CD4-positive, alpha-beta T cell (primary cell): ENCODE measurements at regions of chr2 and their contacts with region 1.

Region 1: GRCh38 chr2:203484266-203485112 is 50.6 kb downstream of the RAPH1 start:
- DNase-seq: peak; percentile 34 to 83 (median 48)
- ATAC-seq: peak; percentile 98
- H3K4me3 ChIP-seq: no peak overlapping the region
- H3K4me3 Mint-ChIP-seq: no peak overlapping the region
- H3K27ac ChIP-seq: no peak overlapping the region
- H3K27ac Mint-ChIP-seq: no peak overlapping the region
- H3K4me1 ChIP-seq: peaks cover 3% of the 10 kb centered on the region
- H3K4me1 Mint-ChIP-seq: peaks cover 6% of the 10 kb centered on the region
- H3K27me3 ChIP-seq: no peaks in the 10 kb centered on the region
- H3K27me3 Mint-ChIP-seq: no peaks in the 10 kb centered on the region
- CTCF ChIP-seq: peak; percentile 77

Region 2: GRCh38 chr2:203056288-203056687 is 428.2 kb before region 1 on chr2:
- CTCF ChIA-PET with region 1: no interaction called
- POLR2A ChIA-PET with region 1: no interaction called
- intact Hi-C with region 1: no loop called
- DNase-seq: no peak
- ATAC-seq: no peak
- H3K4me3 ChIP-seq: no peak overlapping the region
- H3K4me3 Mint-ChIP-seq: no peak overlapping the region
- H3K27ac ChIP-seq: no peak overlapping the region
- H3K27ac Mint-ChIP-seq: no peak overlapping the region
- H3K4me1 ChIP-seq: no peaks in the 10 kb centered on the region
- H3K4me1 Mint-ChIP-seq: no peaks in the 10 kb centered on the region
- H3K27me3 ChIP-seq: no peaks in the 10 kb centered on the region
- H3K27me3 Mint-ChIP-seq: no peaks in the 10 kb centered on the region
- CTCF ChIP-seq: no peak

Region 3: DNA sequence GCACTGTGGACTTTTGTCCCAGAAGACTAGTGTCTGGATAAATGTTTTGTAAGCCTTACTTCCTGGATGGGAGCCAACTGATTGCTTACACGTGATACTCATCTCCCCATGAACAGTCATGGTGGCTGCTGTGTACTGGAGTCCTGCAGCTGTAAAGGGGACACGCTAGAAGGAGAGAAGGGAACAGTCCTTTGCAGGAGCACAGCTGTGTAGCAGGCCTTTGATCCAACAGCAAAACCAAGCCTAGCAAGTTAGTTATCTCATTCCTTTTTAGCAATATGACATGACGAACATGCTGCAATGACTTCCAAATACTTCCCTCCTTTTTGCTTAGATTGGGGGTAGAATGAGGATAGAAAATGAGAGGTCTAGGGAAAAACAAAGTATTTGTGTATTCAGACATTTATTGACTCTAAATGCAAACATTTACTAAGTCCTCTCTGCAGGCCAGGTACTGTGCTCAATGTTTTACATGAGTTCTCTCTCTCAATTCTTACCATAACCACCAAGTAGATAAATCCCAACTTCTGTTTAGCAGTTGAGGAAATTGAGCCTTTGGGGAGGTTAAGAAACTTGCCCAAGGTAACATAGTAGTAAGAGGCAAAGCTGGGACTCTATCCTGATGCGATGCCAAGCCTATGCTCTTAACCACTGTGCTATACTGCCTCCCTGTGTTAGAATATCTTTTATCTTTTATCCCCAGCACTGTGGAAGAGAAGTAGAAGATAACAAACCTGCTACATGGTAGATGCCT is 166.5 kb after region 1 on chr2:
- CTCF ChIA-PET with region 1: no interaction called
- POLR2A ChIA-PET with region 1: no interaction called
- intact Hi-C with region 1: loop called in 1 of 2 experiments (anchors 5 kb)
- DNase-seq: peak in 3 of 14 experiments; percentile 36 to 45 (median 38)
- ATAC-seq: no peak
- H3K4me3 ChIP-seq: no peak overlapping the region
- H3K4me3 Mint-ChIP-seq: no peak overlapping the region
- H3K27ac ChIP-seq: no peak overlapping the region
- H3K27ac Mint-ChIP-seq: no peak overlapping the region
- H3K4me1 ChIP-seq: no peaks in the 10 kb centered on the region
- H3K4me1 Mint-ChIP-seq: peaks cover 29% of the 10 kb centered on the region
- H3K27me3 ChIP-seq: no peaks in the 10 kb centered on the region
- H3K27me3 Mint-ChIP-seq: no peaks in the 10 kb centered on the region
- CTCF ChIP-seq: no peak

Region 4: GRCh38 chr2:203909261-203909967 is 424.9 kb after region 1 on chr2:
- CTCF ChIA-PET with region 1: interaction called, 5 read pairs
- POLR2A ChIA-PET with region 1: interaction called, 4 read pairs
- intact Hi-C with region 1: loop called (anchors 1 kb)
- DNase-seq: peak in 7 of 14 experiments; percentile 10 to 70 (median 45)
- ATAC-seq: peak; percentile 82
- H3K4me3 ChIP-seq: peak overlapping the region; percentile 39
- H3K4me3 Mint-ChIP-seq: peak overlapping the region; percentile 5
- H3K27ac ChIP-seq: no peak overlapping the region
- H3K27ac Mint-ChIP-seq: peak overlapping the region; percentile 18
- H3K4me1 ChIP-seq: peaks cover 13% of the 10 kb centered on the region
- H3K4me1 Mint-ChIP-seq: peaks cover 19% of the 10 kb centered on the region
- H3K27me3 ChIP-seq: no peaks in the 10 kb centered on the region
- H3K27me3 Mint-ChIP-seq: no peaks in the 10 kb centered on the region
- CTCF ChIP-seq: peak; percentile 87

Region 5: GRCh38 chr2:204051476-204051875 is 567.0 kb after region 1 on chr2:
- CTCF ChIA-PET with region 1: no interaction called
- POLR2A ChIA-PET with region 1: no interaction called
- intact Hi-C with region 1: loop called in 1 of 2 experiments (anchors 5 kb)
- DNase-seq: peak in 4 of 14 experiments; percentile 5 to 55 (median 47)
- ATAC-seq: peak; percentile 52
- H3K4me3 ChIP-seq: no peak overlapping the region
- H3K4me3 Mint-ChIP-seq: no peak overlapping the region
- H3K27ac ChIP-seq: no peak overlapping the region
- H3K27ac Mint-ChIP-seq: no peak overlapping the region
- H3K4me1 ChIP-seq: no peaks in the 10 kb centered on the region
- H3K4me1 Mint-ChIP-seq: peaks cover 7% of the 10 kb centered on the region
- H3K27me3 ChIP-seq: no peaks in the 10 kb centered on the region
- H3K27me3 Mint-ChIP-seq: no peaks in the 10 kb centered on the region
- CTCF ChIP-seq: peak; percentile 69

Region 6: DNA sequence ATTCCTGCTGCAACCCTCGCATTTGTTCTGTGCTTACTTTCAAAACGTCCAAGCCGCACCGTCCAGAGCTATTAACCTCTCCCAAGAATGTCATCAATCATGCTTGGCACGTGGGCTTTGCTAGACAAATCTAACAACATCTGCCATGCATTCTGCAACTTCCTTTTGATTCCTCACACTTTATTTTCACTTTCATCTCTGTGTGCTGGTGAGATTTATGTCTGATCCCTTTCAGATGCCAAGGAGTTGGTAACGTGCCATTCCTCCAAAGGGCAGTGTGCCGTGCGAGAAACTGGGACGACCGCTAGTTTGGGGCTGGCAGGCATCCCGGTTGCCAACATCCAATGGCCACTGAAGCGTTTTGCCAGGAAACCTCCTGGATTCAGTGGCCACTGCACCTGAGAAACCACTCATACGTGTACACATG is 830.8 kb after region 1 on chr2:
- CTCF ChIA-PET with region 1: no interaction called
- POLR2A ChIA-PET with region 1: no interaction called
- intact Hi-C with region 1: no loop called
- DNase-seq: no peak
- ATAC-seq: no peak
- H3K4me3 ChIP-seq: no peak overlapping the region
- H3K4me3 Mint-ChIP-seq: no peak overlapping the region
- H3K27ac ChIP-seq: no peak overlapping the region
- H3K27ac Mint-ChIP-seq: no peak overlapping the region
- H3K4me1 ChIP-seq: no peaks in the 10 kb centered on the region
- H3K4me1 Mint-ChIP-seq: no peaks in the 10 kb centered on the region
- H3K27me3 ChIP-seq: peaks cover 0 to 3% of the 10 kb centered on the region in 2 experiments
- H3K27me3 Mint-ChIP-seq: peaks cover 33% of the 10 kb centered on the region
- CTCF ChIP-seq: no peak